Mucosa of descending colon (tissue), 3 donors: ENCODE measurements at regions of chr11 and their contacts with region 1.

Region 1: DNA sequence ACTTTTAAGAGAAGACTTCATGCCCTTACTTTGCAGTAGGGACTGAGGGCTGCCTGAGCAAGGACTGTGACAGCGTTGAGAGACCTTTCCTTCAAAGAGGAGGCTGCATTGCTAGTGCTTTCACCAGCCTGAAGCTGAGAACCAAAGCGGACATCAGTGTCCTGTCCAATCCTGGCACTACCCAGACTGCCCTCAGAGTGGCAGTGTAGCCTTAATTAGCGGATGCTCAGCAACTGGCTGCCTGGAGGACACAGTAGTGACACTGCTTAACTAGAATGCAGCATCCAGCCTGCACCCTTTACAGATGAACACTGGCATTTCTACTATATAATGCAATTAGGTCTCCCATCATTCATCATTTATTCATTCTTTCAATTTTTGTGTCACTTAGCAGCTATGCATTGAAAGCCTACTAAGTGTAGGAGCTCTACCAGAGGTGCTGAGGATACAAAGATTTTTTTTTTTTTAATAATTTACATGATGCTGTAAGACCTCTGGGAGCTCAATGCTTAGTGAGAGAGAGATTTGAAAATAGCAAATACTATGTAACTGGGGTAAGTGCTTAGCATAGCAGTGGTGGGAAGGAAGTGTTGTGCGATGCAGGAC is 36.9 kb upstream of the SLC36A4 start:
- DNase-seq: peak; percentile 57 to 92 (median 85)
- ATAC-seq: peak; percentile 93
- H3K4me3 ChIP-seq: no peak overlapping the region
- H3K4me1 ChIP-seq: peaks cover 6% of the 10 kb centered on the region
- CTCF ChIP-seq: peak; percentile 81

Region 2: DNA sequence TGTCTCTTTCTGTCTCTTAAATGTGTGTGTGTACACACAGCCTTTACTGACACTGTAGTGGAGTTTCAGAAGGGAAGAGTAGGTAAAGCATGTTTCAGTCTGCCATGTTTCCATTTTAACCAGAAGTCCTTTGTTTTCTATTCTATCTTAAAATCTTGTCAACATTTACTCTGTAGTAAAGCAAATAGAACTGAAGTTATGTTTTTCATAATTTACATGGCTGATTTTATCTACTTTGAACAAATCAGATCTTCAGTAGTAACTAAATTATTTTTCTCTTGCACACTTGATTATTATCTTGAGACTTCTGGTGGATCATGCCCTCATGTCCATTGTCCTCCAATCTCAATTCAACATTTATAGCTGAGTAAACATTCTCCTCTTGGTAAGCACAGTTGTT is 82.4 kb after region 1 on chr11:
- intact Hi-C with region 1: no loop called
- DNase-seq: no peak
- ATAC-seq: no peak
- H3K4me3 ChIP-seq: no peak overlapping the region
- H3K4me1 ChIP-seq: no peaks in the 10 kb centered on the region
- CTCF ChIP-seq: no peak

Region 3: GRCh38 chr11:93348930-93349329 is 114.2 kb after region 1 on chr11:
- intact Hi-C with region 1: no loop called
- DNase-seq: no peak
- ATAC-seq: no peak
- H3K4me3 ChIP-seq: no peak overlapping the region
- H3K4me1 ChIP-seq: no peaks in the 10 kb centered on the region
- CTCF ChIP-seq: no peak

Region 4: GRCh38 chr11:93543292-93543977 is 308.7 kb after region 1 on chr11 and contains the start of gene SMCO4:
- intact Hi-C with region 1: loop called (anchors 2 to 10 kb)
- DNase-seq: peak; percentile 90 to 93 (median 90)
- ATAC-seq: peak; percentile 94
- H3K4me3 ChIP-seq: peak within 1 kb of the TSS; percentile 39
- H3K4me1 ChIP-seq: peaks cover 8% of the 10 kb centered on the region
- CTCF ChIP-seq: peak; percentile 69
- total RNA-seq, gene SMCO4: 37.5 to 75.4 (median 41.5) TPM